ENCODE measurements at regions of chrX and their contacts with region 1.

Region 1: GRCh38 chrX:149527705-149528104 is 13.1 kb upstream of the EOLA1 start:
- DNase-seq: peak; percentile 20 to 53
- ATAC-seq: peak; percentile 33 to 68; a peak in 4 of 6 replicates
- H3K4me3 ChIP-seq: no peak overlapping the region
- H3K27ac ChIP-seq: no peak overlapping the region
- H3K4me1 ChIP-seq: peaks cover 6% of the 10 kb centered on the region; the same call in 2 of the 3 replicates
- CTCF ChIP-seq: 0 out of 3 replicates have a peak, but pooled peaks have one; percentile 33
- EP300 ChIP-seq: no peak
- POLR2A ChIP-seq: no peak
- RAD21 ChIP-seq: peak; percentile 13 to 28; a peak in 1 of 5 replicates

Region 2: DNA sequence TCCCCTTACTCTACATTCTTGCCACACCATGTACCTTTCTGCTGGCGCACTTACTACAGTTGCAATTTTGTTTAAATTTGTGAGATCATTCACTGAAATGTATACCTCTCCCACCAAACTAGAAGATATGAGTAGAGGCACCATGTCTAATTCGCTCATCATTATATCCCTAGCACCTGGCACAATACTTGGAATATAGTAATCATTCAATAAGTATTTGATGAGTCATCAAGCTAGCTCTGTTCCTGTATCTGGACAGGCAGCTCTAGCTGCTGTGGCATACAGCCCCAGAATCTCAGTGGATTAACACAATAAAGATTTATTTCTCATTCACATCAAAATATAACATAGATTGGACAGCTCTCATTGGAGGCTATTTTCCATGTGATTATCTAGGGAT is 268.5 kb before region 1 on chrX:
- CTCF ChIA-PET with region 1: no interaction called
- POLR2A ChIA-PET with region 1: no interaction called
- DNase-seq: no peak
- ATAC-seq: no peak
- H3K4me3 ChIP-seq: no peak overlapping the region
- H3K27ac ChIP-seq: no peak overlapping the region
- H3K4me1 ChIP-seq: no peaks in the 10 kb centered on the region
- CTCF ChIP-seq: no peak
- EP300 ChIP-seq: no peak
- POLR2A ChIP-seq: no peak
- RAD21 ChIP-seq: no peak

Region 3: DNA sequence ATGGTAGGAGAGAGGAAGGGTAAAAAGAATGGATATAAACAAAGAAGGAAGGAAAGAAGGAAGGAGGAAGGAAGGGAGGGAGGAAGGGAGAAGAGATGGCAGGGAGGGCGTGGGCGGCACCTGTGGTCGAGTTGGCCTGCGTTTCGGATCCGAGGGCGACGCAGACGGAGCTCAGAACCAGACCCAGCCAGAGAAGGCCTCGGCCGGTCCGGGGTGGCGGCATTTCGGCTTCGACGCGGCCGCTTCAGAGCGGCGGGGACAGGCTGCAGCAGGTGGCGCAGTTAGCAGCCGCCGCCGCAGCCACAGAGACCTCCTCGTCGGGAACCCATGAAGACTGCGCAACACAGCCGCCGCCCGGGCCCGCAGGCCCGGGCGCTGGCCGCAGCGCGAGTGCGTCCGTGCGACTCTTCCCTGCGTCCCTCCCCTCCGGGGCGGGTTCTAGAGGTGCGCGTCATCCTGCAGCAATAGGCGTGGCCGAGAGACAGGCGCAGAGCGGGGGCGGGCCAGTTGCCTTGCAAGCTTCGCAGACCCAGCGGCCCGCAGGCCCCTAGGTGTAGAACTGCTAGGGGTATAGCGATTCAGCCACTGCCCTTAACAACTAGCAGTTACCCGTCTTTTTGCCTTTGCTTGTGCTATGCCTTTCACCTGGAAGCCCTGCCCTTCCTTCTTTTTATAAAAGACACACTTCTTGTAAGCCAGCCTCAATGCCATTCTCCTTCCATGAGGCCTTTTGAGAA is 22.6 kb before region 1 on chrX and contains the start of gene IDS:
- CTCF ChIA-PET with region 1: interaction called, 21 read pairs
- POLR2A ChIA-PET with region 1: interaction called, 13 read pairs
- DNase-seq: peak; percentile 80 to 88
- ATAC-seq: peak; percentile 88 to 92
- H3K4me3 ChIP-seq: peak within 1 kb of the TSS; percentile 65
- H3K27ac ChIP-seq: peak within 1 kb of the TSS; percentile 83 to 98
- H3K4me1 ChIP-seq: peaks cover 16% of the 10 kb centered on the region; the same call in 2 of the 3 replicates
- CTCF ChIP-seq: no peak
- EP300 ChIP-seq: no peak
- POLR2A ChIP-seq: peak; percentile 75
- RAD21 ChIP-seq: no peak
- polyA plus RNA-seq, gene IDS: 120 and 135 TPM in 2 replicates

Region 4: DNA sequence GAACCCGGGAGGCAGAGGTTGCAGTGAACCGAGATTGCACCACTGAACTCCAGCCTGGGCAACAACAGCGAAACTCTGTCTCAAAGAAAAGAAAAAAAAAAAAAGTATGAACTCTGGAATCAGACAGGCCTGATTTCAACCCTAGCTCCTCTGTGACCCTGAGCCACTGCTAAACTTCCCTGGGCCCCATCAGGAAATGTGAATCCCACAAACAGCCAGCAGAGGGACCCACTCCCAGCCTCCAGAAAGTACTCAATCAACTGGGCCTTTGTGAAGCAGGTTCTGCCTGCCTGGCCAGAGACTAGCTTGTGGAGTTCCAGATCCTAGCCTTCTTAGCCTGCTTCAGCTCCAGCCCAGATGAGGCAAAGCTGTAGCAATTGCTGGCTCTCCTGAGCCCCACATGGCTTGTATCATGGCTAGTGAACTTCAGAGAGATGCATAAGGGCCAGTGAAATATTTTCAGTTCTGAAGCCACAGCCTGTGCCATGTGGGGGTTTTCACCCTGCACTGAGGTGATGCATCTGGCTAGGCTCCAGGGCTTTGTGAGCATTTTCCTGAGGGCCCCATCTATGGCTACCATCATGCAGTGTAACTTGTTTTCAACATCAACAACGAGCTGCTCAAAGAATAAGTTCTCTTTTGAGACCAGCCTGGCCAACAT is 15.3 kb before region 1 on chrX:
- CTCF ChIA-PET with region 1: interaction called, 40 read pairs
- POLR2A ChIA-PET with region 1: no interaction called
- DNase-seq: peak; percentile 46 to 56
- ATAC-seq: peak; percentile 83 to 94
- H3K4me3 ChIP-seq: no peak overlapping the region
- H3K27ac ChIP-seq: no peak overlapping the region
- H3K4me1 ChIP-seq: no peaks in the 10 kb centered on the region
- CTCF ChIP-seq: peak; percentile 46
- EP300 ChIP-seq: no peak
- POLR2A ChIP-seq: no peak
- RAD21 ChIP-seq: peak; percentile 41 to 49; a peak in 4 of 5 replicates

Region 5: GRCh38 chrX:149539283-149540130 is 11.8 kb after region 1 on chrX:
- CTCF ChIA-PET with region 1: interaction called, 4 read pairs
- POLR2A ChIA-PET with region 1: interaction called, 13 read pairs
- DNase-seq: peak; percentile 72 to 93
- ATAC-seq: peak; percentile 77 to 81
- H3K4me3 ChIP-seq: peak overlapping the region; percentile 94
- H3K27ac ChIP-seq: peak overlapping the region; percentile 78 to 91
- H3K4me1 ChIP-seq: 0 out of 3 replicates have a peak, but pooled peaks cover 6% of the 10 kb centered on the region
- CTCF ChIP-seq: no peak
- EP300 ChIP-seq: no peak
- POLR2A ChIP-seq: no peak
- RAD21 ChIP-seq: no peak